ENCODE measurements at regions of chr1 and their contacts with region 1.

Region 1: DNA sequence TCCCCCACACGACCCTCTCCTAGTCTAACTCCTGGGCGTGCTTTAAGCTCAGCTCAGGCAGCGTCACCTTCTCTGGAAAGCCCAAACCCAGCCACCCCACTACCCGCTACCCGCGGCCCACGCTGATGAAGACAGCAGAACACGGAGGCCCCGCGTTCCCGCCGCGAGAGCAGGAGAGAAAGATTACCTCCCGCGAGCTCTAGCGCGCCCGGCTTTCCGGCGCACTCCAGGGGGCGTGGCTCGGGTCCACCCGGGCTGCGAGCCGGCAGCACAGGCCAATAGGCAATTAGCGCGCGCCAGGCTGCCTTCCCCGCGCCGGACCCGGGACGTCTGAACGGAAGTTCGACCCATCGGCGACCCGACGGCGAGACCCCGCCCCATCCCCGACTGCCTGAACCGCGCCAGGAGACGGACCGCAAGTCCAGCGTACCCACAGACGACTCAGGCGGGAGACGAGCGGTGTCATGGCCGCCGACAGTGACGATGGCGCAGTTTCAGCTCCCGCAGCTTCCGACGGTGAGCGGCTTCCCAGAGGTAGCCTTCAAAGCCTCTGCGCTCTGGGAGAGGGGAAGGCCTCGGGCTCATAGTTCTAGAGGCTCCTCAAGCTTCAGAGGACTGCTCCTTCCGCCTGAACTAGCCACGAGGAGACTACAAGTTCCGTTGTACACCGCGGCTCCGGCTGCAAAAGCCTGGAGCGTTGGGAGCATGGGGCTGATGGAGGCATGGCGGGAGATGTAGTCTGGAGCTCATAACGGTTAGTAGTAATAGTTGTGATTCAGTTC is at the starts of genes MUTYH and TOE1:
- DNase-seq: peak; percentile 87
- ATAC-seq: peak; percentile 86
- H3K4me3 ChIP-seq: peak within 1 kb of the TSS; percentile 68 to 83 (median 80)
- H3K27ac ChIP-seq: peak within 1 kb of the TSS; percentile 91
- H3K4me1 ChIP-seq: peaks cover 59% of the 10 kb centered on the region
- H3K27me3 ChIP-seq: no peaks in the 10 kb centered on the region; a peak in 1 of 5 replicates
- CTCF ChIP-seq: peak; percentile 24; the same call in 1 of the 2 replicates
- EP300 ChIP-seq: no peak
- POLR2A ChIP-seq: peak; percentile 87 to 90
- RAD21 ChIP-seq: peak; percentile 56
- total RNA-seq, gene MUTYH: 12.7 and 17.1 TPM in 2 replicates
- total RNA-seq, gene TOE1: 17.4 and 19.0 TPM in 2 replicates

Region 2: GRCh38 chr1:44985747-44986359 is 354.1 kb before region 1 on chr1:
- CTCF ChIA-PET with region 1: no interaction called
- POLR2A ChIA-PET with region 1: interaction called, 11 read pairs
- in situ Hi-C with region 1: no loop called
- intact Hi-C with region 1: no loop called
- DNase-seq: no peak
- ATAC-seq: peak; percentile 51
- H3K4me3 ChIP-seq: peak overlapping the region; percentile 62 to 87 (median 79)
- H3K27ac ChIP-seq: peak overlapping the region; percentile 45
- H3K4me1 ChIP-seq: peaks cover 15% of the 10 kb centered on the region
- H3K27me3 ChIP-seq: no peaks in the 10 kb centered on the region; a peak in 1 of 5 replicates
- CTCF ChIP-seq: no peak
- EP300 ChIP-seq: no peak
- POLR2A ChIP-seq: no peak
- RAD21 ChIP-seq: no peak

Region 3: GRCh38 chr1:45321444-45321843 is 18.5 kb before region 1 on chr1:
- CTCF ChIA-PET with region 1: no interaction called
- POLR2A ChIA-PET with region 1: interaction called, 16 read pairs
- in situ Hi-C with region 1: no loop called
- intact Hi-C with region 1: no loop called
- DNase-seq: no peak
- ATAC-seq: no peak
- H3K4me3 ChIP-seq: no peak overlapping the region
- H3K27ac ChIP-seq: no peak overlapping the region
- H3K4me1 ChIP-seq: peaks cover 30% of the 10 kb centered on the region
- H3K27me3 ChIP-seq: peaks cover 0 to 2% of the 10 kb centered on the region in 2 experiments; a peak in 1 of 5 replicates
- CTCF ChIP-seq: no peak
- EP300 ChIP-seq: no peak
- POLR2A ChIP-seq: no peak
- RAD21 ChIP-seq: no peak

Region 4: GRCh38 chr1:45359882-45360513 is 20.0 kb after region 1 on chr1:
- CTCF ChIA-PET with region 1: no interaction called
- POLR2A ChIA-PET with region 1: interaction called, 23 read pairs
- in situ Hi-C with region 1: no loop called
- intact Hi-C with region 1: no loop called
- DNase-seq: peak; percentile 40
- ATAC-seq: peak; percentile 47
- H3K4me3 ChIP-seq: no peak overlapping the region
- H3K27ac ChIP-seq: no peak overlapping the region
- H3K4me1 ChIP-seq: peaks cover 32% of the 10 kb centered on the region
- H3K27me3 ChIP-seq: no peaks in the 10 kb centered on the region
- CTCF ChIP-seq: peak; percentile 53
- EP300 ChIP-seq: no peak
- POLR2A ChIP-seq: no peak
- RAD21 ChIP-seq: peak; percentile 46; the same call in 1 of the 2 replicates

Region 5: DNA sequence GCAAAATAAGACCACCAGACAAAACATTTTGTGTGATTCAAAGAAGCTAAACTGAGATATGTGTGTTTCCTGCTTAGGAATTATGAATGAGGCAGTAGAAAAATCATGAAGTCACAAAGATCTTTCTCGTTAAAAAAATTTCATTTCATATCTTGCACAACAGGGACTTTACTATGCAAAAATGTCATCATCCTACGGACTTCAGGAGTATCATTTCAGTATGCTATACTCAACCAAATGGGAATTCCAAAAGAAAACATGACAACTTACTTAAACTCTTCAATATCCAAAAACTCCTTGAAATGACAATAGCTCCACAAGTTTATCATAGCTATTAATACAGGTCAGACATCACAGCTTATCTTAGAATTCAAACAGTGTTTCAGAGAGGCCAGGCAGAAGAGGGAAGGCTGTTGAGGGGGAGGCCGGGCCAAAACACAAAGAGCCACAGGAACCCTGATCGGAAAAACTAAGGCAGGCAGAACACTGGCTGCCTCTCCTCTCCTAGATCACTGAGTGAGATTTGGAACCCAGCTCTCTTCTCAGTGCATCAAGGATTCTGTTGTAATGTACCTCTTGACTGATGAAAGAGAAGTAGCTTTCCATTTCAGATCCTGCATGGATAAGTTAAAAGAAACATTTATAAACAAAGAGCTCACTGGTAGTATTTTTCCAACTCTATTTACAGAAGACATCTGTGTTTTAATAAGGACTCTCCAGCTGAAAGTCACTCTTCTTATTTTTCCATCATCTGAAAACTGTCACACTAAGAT is 84.1 kb after region 1 on chr1:
- CTCF ChIA-PET with region 1: no interaction called
- POLR2A ChIA-PET with region 1: no interaction called
- in situ Hi-C with region 1: no loop called
- intact Hi-C with region 1: no loop called
- DNase-seq: no peak
- ATAC-seq: no peak
- H3K4me3 ChIP-seq: no peak overlapping the region
- H3K27ac ChIP-seq: no peak overlapping the region
- H3K4me1 ChIP-seq: 0 out of 2 replicates have a peak, but pooled peaks cover 5% of the 10 kb centered on the region
- H3K27me3 ChIP-seq: no peaks in the 10 kb centered on the region; a peak in 1 of 5 replicates
- CTCF ChIP-seq: no peak
- EP300 ChIP-seq: no peak
- POLR2A ChIP-seq: no peak
- RAD21 ChIP-seq: no peak

Region 6: DNA sequence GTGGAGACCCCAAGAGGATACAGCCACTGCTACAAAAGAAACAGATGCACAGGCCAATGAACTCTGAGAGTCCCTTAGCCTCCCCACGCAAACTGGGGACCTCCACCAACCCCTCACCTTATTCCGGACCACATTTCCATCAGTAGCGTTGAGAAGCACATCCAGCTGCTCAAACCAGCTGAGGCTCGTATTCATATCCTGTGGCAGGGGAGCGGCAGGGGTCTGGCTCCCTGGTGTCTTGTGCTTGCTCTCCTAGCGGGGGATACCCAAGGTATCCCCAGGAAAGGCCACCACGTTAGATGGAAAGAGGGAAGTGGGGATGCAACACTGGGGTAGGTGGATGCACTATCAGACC is 159.4 kb after region 1 on chr1:
- CTCF ChIA-PET with region 1: no interaction called
- POLR2A ChIA-PET with region 1: interaction called, 27 read pairs
- in situ Hi-C with region 1: no loop called
- intact Hi-C with region 1: loop called (anchors 5 kb)
- DNase-seq: no peak
- ATAC-seq: no peak; the same call in 1 of the 3 replicates
- H3K4me3 ChIP-seq: peak overlapping the region; percentile 74 to 83 (median 77)
- H3K27ac ChIP-seq: peak overlapping the region; percentile 71
- H3K4me1 ChIP-seq: peaks cover 43% of the 10 kb centered on the region
- H3K27me3 ChIP-seq: no peaks in the 10 kb centered on the region; a peak in 1 of 5 replicates
- CTCF ChIP-seq: no peak
- EP300 ChIP-seq: no peak
- POLR2A ChIP-seq: no peak
- RAD21 ChIP-seq: no peak

Measured in HepG2 (cell line).